ENCODE measurements at regions of chr3 and their contacts with region 1.

Region 1: GRCh38 chr3:125129512-125129962 is 73.7 kb upstream of the HEG1 start:
- DNase-seq: peak; percentile 31 to 73
- ATAC-seq: peak; percentile 88 to 94
- H3K4me3 ChIP-seq: no peak overlapping the region
- H3K27ac ChIP-seq: peak overlapping the region; percentile 38 to 52 (median 44)
- H3K4me1 ChIP-seq: peaks cover 5 to 15% of the 10 kb centered on the region in 2 donors
- H3K27me3 ChIP-seq: no peaks in the 10 kb centered on the region
- CTCF ChIP-seq: no peak
- POLR2A ChIP-seq: no peak

Region 2: DNA sequence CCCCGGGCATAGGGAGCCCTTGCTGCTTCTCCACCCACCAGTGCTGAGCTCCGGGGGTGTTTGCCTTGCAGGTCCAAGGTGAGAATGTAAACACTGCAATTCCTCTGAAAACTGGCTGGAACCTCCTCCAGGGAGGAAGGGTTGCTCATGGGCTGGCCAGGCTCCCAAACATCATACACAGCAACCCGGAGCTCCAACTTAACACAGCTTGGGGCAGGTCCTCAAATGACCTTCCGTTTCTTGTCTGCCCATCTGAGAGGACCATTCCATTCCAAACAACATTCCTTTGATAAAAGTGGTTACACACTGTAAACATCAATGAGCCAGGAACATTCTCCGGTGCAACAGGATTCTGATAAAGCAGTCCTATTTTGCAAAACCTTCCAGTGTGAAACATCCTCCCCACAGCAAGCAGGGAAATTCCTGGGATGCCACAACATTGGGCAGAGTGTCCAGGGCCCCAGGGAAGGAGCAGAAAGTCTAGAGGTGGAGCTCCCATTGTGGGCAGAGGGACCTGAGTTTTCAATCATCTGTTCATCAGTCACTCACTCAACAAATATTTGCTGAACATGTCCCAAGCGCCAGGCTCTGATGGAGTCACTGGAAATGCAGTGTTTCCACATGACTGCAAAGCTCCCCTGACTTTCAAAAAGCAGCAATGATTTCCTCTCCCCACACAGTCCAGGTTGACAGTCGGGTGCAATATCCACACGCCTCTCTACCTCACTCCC is 66.5 kb before region 1 on chr3:
- in situ Hi-C with region 1: no loop called
- intact Hi-C with region 1: loop called (anchors 5 kb)
- DNase-seq: no peak
- ATAC-seq: no peak
- H3K4me3 ChIP-seq: no peak overlapping the region
- H3K27ac ChIP-seq: peak overlapping the region in 3 of 4 donors; percentile 78 to 85 (median 79)
- H3K4me1 ChIP-seq: peaks cover 30 to 37% of the 10 kb centered on the region in 2 donors
- H3K27me3 ChIP-seq: no peaks in the 10 kb centered on the region
- CTCF ChIP-seq: no peak
- POLR2A ChIP-seq: no peak

Region 3: DNA sequence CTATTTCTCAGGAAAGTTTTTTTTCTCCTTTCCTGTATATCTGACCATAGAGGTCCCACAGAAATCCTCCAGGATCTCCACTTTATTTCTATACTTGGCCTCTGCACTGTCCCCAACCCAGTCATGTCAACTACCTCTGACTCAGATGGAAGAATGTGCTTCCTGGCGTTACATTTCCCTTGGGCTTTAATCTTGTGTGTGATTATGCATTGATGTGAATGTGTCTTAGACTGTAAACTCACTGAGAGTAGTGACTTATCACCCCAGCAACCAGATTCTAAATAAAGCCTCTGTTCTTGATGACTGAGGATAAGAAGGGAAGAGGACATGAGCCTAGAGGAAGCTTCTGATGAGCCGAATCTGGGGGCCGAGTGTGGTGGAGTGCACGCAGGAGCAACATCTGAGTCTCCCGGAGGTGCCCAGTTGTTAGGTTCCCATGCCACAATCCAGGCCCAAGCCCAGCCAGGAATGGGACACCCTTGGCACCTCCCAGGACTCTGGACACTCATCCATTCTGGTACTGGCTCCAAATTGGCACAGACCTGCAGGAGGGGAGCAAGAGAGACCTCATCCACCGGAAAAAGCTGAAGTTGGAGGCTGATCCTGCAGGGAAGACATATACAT is 41.7 kb before region 1 on chr3:
- in situ Hi-C with region 1: no loop called
- intact Hi-C with region 1: loop called (anchors 5 kb)
- DNase-seq: no peak
- ATAC-seq: peak in 1 of 2 donors; percentile 65
- H3K4me3 ChIP-seq: no peak overlapping the region
- H3K27ac ChIP-seq: no peak overlapping the region
- H3K4me1 ChIP-seq: peaks cover 8 to 9% of the 10 kb centered on the region in 2 donors
- H3K27me3 ChIP-seq: no peaks in the 10 kb centered on the region
- CTCF ChIP-seq: no peak
- POLR2A ChIP-seq: no peak

Region 4: GRCh38 chr3:125374996-125375941 is 245.7 kb after region 1 on chr3 and contains the start of gene ZNF148:
- in situ Hi-C with region 1: no loop called
- intact Hi-C with region 1: no loop called
- DNase-seq: peak; percentile 82 to 87
- ATAC-seq: peak; percentile 97 to 98
- H3K4me3 ChIP-seq: peak within 1 kb of the TSS; percentile 69 to 88 (median 78)
- H3K27ac ChIP-seq: peak within 1 kb of the TSS; percentile 84 to 95 (median 92)
- H3K4me1 ChIP-seq: peaks cover 13 to 21% of the 10 kb centered on the region in 2 donors
- H3K27me3 ChIP-seq: no peaks in the 10 kb centered on the region
- CTCF ChIP-seq: no peak
- POLR2A ChIP-seq: peak; percentile 53 to 79
- total RNA-seq, gene ZNF148: 17.0 to 34.9 (median 20.0) TPM